ENCODE measurements at regions of chr15 and their contacts with region 1.

Region 1: DNA sequence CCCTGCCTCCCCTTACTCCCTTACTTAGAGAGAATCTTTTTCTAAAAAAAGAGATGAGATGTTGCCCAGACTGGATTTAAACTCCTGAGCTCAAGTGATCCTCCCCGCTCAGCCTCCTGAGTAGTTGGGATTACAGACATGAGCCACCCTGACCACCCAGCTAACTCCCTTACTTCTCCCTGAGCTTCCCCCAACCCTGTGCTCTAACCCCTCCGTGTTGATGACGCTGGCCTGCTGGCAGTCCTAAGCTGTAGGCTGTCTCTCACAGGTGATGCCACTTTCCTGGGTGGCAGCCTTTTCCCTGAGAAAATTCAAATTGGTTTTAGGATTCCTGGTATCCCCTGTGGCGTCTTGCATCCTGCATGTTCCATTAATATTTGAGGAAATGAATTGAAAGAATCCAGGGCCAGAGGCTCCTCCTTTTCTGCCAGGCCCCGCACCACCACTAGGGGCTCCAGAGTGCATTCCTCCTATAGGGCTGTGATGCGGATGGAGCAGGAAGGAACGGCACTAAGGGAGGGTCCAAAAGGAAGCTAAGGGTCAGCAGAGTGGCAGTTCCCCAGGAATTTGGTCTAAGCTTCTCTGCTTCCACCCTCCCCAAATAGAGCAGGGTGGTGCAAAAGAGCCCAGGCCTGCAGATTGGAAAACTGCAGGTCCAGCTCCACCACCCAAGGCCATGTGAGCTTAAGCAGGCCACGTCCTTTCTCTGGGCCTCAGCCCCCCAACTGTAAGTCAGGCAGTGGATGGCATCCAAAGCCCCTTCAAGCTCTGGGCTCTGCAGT is 101.1 kb downstream of the DAPK2 start:
- DNase-seq: peak; percentile 83
- H3K4me3 ChIP-seq: no peak overlapping the region
- H3K27ac ChIP-seq: no peak overlapping the region
- H3K4me1 ChIP-seq: peaks cover 0 to 10% (median 1%) of the 10 kb centered on the region in 4 donors
- H3K27me3 ChIP-seq: no peaks in the 10 kb centered on the region
- CTCF ChIP-seq: peak; percentile 90 to 96 (median 94)
- EP300 ChIP-seq: no peak
- POLR2A ChIP-seq: no peak

Region 2: DNA sequence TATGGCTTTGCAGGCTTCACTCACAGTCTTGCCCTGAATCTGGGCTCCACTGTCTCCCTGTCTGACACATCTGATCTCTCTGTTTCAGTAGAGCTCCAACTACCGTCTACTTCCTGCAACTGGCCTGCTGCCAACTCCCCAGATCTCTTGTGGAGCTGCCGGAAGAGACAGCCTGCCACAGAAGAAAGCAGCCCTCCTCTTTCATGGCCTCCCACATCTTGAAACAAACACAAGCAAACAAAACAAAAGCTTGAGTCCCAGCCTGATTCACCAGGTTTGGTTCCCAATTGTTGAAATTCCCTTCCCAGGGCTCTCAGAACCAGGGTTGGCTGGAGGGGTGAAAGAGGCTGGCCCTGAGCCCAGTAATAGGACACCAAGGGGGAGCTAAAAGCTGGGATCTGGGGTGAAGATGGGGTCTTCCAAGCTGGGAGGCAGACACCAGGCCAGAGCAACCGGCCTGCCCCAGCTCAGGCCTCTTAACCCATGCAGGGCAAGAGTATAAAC is 508.3 kb before region 1 on chr15:
- in situ Hi-C with region 1: no loop called
- intact Hi-C with region 1: no loop called
- DNase-seq: peak; percentile 76
- H3K4me3 ChIP-seq: no peak overlapping the region
- H3K27ac ChIP-seq: peak overlapping the region in 3 of 4 donors; percentile 9 to 53 (median 39)
- H3K4me1 ChIP-seq: peaks cover 7 to 15% (median 10%) of the 10 kb centered on the region in 4 donors
- H3K27me3 ChIP-seq: no peaks in the 10 kb centered on the region
- CTCF ChIP-seq: no peak
- EP300 ChIP-seq: no peak
- POLR2A ChIP-seq: no peak

Region 3: DNA sequence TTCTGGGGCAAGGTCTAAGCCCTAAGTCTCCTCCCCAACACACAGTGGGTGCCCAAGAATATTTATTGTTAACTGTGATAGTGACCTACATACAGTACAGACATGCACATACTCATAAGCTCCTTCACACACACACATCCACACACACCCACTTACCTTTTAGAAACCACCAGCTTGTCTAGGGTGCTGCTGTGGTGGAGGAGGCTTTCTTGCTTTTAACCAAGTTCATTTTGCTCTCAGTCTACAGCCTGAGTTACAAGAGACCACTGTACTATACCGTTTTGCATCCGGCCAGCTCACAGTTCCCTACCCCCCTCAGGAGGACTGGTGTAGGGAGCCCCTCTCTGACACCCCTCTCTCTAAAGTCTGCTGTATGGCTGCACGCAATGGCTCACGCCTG is 84.4 kb after region 1 on chr15:
- in situ Hi-C with region 1: loop called in 1 of 4 experiments (anchors 5 kb)
- intact Hi-C with region 1: no loop called
- DNase-seq: no peak
- H3K4me3 ChIP-seq: no peak overlapping the region
- H3K27ac ChIP-seq: no peak overlapping the region
- H3K4me1 ChIP-seq: peaks cover 0 to 20% (median 9%) of the 10 kb centered on the region in 4 donors
- H3K27me3 ChIP-seq: no peaks in the 10 kb centered on the region
- CTCF ChIP-seq: no peak
- EP300 ChIP-seq: no peak
- POLR2A ChIP-seq: no peak